Activated CD4-positive, alpha-beta memory T cell treated with anti-CD3 and anti-CD28 coated beads for 36 hours (primary cell): ENCODE measurements at regions of chr2 and their contacts with region 1.

Region 1: DNA sequence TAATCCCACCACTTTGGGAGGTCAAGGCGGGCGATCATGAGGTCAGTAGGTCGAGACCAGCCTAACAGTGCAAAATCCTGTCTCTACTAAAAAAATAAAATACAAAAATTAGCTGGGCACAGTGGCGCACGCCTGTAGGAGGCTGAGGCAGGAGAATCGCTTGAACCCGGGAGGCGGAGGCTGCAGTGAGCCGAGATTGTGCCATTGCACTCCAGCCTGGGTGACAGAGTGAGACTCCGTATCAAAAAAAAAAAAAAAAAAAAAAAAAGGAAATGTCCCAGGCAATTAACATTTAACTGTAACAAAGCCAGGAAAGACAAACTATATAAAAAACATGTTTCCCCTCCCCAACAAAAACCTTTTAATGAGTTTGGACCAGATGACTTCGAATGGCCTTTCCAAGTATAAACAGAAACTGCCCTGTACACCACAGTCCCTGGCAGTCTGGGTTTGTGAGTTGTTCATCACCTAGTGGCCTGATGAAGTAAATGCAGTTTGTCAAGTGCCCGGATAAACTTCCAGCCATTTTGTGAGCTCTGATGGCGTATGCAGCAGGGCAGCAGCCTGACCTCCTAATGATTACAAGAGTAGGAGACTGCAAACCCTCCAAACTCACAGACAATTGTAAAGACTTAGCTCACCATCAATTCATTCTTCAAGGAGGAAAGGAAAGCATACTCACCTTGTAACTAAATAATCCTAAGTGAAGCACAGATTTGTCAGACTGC is 16.6 kb upstream of the PCBP1 start:
- DNase-seq: peak; percentile 72
- H3K4me3 Mint-ChIP-seq: peak overlapping the region; percentile 35
- H3K27ac Mint-ChIP-seq: peak overlapping the region; percentile 98
- H3K4me1 Mint-ChIP-seq: peaks cover 46% of the 10 kb centered on the region
- H3K27me3 Mint-ChIP-seq: no peaks in the 10 kb centered on the region

Region 2: DNA sequence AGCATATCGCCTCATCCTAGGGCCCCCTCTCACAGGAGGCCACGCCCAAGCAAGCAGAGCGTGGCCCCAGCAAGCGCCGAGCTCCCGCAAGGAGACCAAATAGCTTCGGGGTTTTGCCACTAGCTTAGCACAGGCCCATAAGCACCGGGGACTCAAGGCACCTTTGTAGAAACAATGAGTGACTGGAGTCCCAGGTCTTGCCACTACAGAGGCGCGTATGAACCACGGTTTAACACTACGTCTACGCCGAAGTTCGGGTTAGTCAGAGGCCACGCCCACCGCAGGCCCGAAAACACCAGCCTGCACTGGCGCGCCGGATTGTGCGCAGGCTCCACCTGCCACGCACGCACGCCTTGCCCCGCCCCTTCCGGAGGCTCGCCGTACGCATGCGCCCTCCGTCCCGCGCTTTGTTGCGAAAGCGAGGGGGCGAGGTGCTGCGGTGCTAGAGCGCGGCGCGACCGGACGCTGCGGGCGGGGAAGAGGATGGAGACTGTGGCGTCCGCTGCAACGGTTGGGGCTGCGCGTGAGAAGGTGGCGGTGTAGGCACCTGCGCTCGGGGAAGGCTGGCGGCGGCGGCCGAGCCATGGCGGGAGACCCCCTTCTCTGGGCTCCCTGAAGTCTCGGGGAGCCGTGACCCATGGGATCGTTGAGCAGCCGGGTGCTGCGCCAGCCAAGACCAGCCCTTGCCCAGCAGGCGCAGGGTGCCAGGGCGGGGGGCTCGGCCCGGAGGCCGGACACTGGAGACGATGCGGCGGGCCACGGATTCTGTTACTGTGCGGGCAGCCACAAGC is 241.3 kb before region 1 on chr2 and contains the start of gene GMCL1:
- CTCF ChIA-PET with region 1: no interaction called
- POLR2A ChIA-PET with region 1: no interaction called
- intact Hi-C with region 1: loop called (anchors 5 kb)
- DNase-seq: peak; percentile 99
- H3K4me3 Mint-ChIP-seq: peak within 1 kb of the TSS; percentile 81
- H3K27ac Mint-ChIP-seq: peak within 1 kb of the TSS; percentile 92
- H3K4me1 Mint-ChIP-seq: peaks cover 40% of the 10 kb centered on the region
- H3K27me3 Mint-ChIP-seq: no peaks in the 10 kb centered on the region
- total RNA-seq, gene GMCL1: 20.6 to 22.1 TPM

Region 3: GRCh38 chr2:69946351-69947077 is 124.2 kb before region 1 on chr2:
- CTCF ChIA-PET with region 1: no interaction called
- POLR2A ChIA-PET with region 1: interaction called, 10 read pairs
- intact Hi-C with region 1: loop called (anchors 1 kb)
- DNase-seq: peak; percentile 80
- H3K4me3 Mint-ChIP-seq: no peak overlapping the region
- H3K27ac Mint-ChIP-seq: peak overlapping the region; percentile 85
- H3K4me1 Mint-ChIP-seq: peaks cover 36% of the 10 kb centered on the region
- H3K27me3 Mint-ChIP-seq: no peaks in the 10 kb centered on the region

Region 4: DNA sequence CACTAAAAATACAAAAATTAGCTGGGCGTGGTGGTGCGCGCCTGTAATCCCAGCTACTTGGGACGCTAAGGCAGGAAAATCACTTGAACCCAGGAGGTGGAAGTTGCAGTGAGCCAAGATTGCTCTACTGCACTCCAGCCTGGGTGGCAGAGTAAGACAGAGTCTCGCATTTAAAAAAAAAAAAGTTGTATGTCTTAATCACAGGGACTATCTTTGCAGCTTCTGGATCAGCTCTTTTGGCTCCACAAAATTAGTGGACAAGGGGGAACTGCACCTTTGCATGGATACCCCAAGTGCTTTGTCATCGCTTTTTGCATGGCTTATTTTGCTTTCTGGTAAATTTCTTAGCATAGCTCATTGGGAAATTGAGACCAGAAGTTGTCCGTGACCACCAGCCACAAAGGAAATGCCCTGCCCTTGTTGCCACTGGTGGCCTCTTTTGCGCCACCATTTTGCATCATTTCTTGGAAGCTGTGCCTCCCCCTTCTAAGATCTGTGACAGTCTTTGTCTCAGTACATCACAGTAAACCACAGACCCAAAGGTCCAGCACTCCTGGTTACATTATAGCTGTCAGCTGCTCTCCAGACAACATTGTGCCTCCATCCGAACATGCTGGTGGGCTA is 27.3 kb before region 1 on chr2:
- CTCF ChIA-PET with region 1: interaction called, 5 read pairs
- POLR2A ChIA-PET with region 1: interaction called, 13 read pairs
- intact Hi-C with region 1: loop called (anchors 2 kb)
- DNase-seq: peak; percentile 78
- H3K4me3 Mint-ChIP-seq: no peak overlapping the region
- H3K27ac Mint-ChIP-seq: peak overlapping the region; percentile 56
- H3K4me1 Mint-ChIP-seq: peaks cover 33% of the 10 kb centered on the region
- H3K27me3 Mint-ChIP-seq: no peaks in the 10 kb centered on the region

Region 5: DNA sequence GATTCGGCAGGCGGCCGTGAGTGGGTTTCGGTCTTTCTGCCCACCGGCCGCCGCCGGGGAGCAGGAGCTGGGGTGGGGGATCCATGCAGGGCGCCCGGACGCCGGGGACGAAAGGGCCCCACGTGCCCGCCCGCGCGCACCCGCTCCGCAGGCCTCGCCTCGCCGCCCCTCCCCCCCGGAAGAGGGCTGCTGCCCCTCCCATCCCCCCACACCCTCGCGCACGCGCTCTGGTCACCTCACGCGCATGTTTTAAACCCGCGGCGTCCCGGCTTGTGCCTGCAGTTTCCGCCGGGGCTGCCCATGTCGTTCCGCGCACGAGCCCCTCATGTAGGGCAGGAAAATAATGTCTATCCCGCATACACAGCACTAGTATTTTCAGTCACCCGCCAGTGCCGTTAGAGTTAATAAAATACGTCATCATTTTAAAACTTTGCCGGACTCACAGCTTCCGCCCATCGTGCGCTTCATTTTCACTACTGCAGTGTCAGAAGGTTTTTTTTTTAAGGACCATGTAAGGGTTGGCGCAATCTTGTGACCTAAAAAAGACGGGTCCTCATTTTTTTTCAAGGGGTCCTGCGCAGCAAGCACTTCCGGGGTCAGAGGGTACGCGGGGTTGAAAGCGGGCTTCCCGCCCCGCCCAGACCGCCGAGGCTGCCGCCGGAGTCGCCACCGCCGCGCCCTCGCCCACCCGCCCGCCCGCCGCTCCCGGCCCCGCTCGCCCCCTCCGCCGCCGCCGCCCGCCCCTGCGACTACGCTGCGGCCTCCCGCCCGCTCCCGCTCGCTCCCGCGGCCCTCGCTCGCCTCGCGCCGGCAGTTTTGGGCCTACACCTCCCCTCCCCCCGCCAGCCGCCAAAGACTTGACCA is 16.4 kb after region 1 on chr2 and contains the start of gene PCBP1:
- CTCF ChIA-PET with region 1: interaction called, 78 read pairs
- POLR2A ChIA-PET with region 1: interaction called, 12 read pairs
- intact Hi-C with region 1: loop called (anchors 1 kb)
- DNase-seq: peak; percentile 96
- H3K4me3 Mint-ChIP-seq: peak within 1 kb of the TSS; percentile 97
- H3K27ac Mint-ChIP-seq: peak within 1 kb of the TSS; percentile 100
- H3K4me1 Mint-ChIP-seq: peaks cover 49% of the 10 kb centered on the region
- H3K27me3 Mint-ChIP-seq: peaks cover 3% of the 10 kb centered on the region
- total RNA-seq, gene PCBP1: 444 to 449 TPM

Region 6: DNA sequence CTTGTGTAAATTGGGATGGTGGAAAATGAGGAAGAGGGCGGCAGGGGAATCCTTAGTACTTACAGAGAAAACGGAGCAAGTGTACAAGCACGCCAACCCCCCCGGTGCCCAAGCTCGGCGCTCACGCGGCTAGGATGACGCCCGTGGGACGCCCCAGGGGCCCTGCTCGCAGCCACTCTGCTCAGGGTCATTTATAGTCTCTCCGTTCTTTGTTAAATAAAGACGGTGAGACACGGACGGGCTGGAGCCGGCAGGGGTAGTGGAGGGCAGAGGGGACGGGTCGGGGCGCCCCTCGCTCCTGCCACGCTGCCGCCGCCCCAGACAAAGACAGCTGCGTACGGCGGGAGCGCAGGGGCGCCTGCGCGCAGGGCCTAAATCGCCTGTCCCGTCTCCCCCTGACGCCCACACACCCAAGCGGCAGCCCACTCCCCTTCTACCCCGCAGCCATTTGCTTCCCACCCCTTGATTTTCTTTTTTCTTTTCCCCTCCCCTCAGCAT is 54.3 kb after region 1 on chr2:
- CTCF ChIA-PET with region 1: interaction called, 6 read pairs
- POLR2A ChIA-PET with region 1: interaction called, 11 read pairs
- intact Hi-C with region 1: no loop called
- DNase-seq: peak; percentile 67
- H3K4me3 Mint-ChIP-seq: peak overlapping the region; percentile 92
- H3K27ac Mint-ChIP-seq: peak overlapping the region; percentile 98
- H3K4me1 Mint-ChIP-seq: peaks cover 62% of the 10 kb centered on the region
- H3K27me3 Mint-ChIP-seq: no peaks in the 10 kb centered on the region

Region 7: GRCh38 chr2:70142590-70143313 is 72.0 kb after region 1 on chr2:
- CTCF ChIA-PET with region 1: interaction called, 12 read pairs
- POLR2A ChIA-PET with region 1: interaction called, 9 read pairs
- intact Hi-C with region 1: loop called (anchors 1 kb)
- DNase-seq: peak; percentile 100
- H3K4me3 Mint-ChIP-seq: peak overlapping the region; percentile 89
- H3K27ac Mint-ChIP-seq: peak overlapping the region; percentile 96
- H3K4me1 Mint-ChIP-seq: peaks cover 62% of the 10 kb centered on the region
- H3K27me3 Mint-ChIP-seq: no peaks in the 10 kb centered on the region